Heart left ventricle (tissue), 16 donors: ENCODE measurements at regions of chr1 and their contacts with region 1.

Region 1: DNA sequence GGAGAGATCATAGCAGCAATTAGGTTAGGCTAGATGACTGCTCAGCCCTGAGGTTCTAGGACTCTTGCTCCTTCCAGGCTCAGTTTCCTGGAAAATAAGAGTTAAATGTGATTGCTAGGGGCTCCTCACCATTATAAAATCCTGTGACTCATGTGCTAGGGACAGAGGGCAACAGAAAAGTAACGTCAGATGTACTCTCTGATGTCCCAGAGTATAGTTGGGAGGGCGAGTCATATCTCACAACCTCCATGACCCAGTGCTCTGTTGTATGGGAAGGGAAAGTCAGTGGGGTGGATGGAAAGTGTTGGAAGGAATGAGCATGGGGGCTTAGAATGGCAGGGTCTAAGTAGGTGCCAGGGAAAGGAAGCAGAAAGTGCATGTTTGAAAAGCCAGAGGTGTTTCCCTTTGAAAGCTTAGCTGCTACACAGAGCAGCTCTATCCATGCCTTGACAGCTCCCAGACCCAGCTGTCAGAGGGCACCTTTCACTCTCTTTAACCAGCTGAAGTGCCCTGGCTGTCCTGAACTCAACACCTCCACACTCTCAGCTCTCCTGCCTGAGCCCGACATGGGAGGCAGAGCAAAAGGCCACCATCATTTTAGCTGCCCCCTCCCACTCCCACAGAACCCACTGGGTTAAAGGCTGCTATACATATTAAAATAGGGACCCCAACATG is 11.6 kb downstream of the GJA5 start:
- DNase-seq: peak in 4 of 5 donors; percentile 37 to 76 (median 58)
- ATAC-seq: peak; percentile 93 to 97 (median 96)
- H3K4me3 ChIP-seq: no peak overlapping the region
- H3K27ac ChIP-seq: peak overlapping the region in 9 of 12 donors; percentile 23 to 81 (median 64)
- H3K4me1 ChIP-seq: peaks cover 0 to 29% (median 6%) of the 10 kb centered on the region in 12 donors
- H3K27me3 ChIP-seq: no peaks in the 10 kb centered on the region
- CTCF ChIP-seq: no peak
- POLR2A ChIP-seq: no peak

Region 2: GRCh38 chr1:147640553-147641165 is 108.2 kb before region 1 on chr1:
- intact Hi-C with region 1: no loop called
- DNase-seq: peak; percentile 63 to 77 (median 73)
- ATAC-seq: peak; percentile 85 to 96 (median 94)
- H3K4me3 ChIP-seq: peak overlapping the region in 1 of 12 donors; percentile 18
- H3K27ac ChIP-seq: no peak overlapping the region
- H3K4me1 ChIP-seq: peaks cover 0 to 23% (median 6%) of the 10 kb centered on the region in 12 donors
- H3K27me3 ChIP-seq: no peaks in the 10 kb centered on the region
- CTCF ChIP-seq: peak; percentile 66 to 87 (median 74)
- POLR2A ChIP-seq: no peak

Region 3: GRCh38 chr1:147735423-147735822 is 13.4 kb before region 1 on chr1:
- intact Hi-C with region 1: loop called in 1 of 10 experiments (anchors 2 kb)
- DNase-seq: peak in 2 of 5 donors; percentile 32 to 57
- ATAC-seq: peak; percentile 37 to 80 (median 76)
- H3K4me3 ChIP-seq: no peak overlapping the region
- H3K27ac ChIP-seq: peak overlapping the region in 5 of 12 donors; percentile 3 to 60 (median 31)
- H3K4me1 ChIP-seq: peaks cover 0 to 45% (median 7%) of the 10 kb centered on the region in 12 donors
- H3K27me3 ChIP-seq: no peaks in the 10 kb centered on the region
- CTCF ChIP-seq: no peak
- POLR2A ChIP-seq: no peak

Region 4: DNA sequence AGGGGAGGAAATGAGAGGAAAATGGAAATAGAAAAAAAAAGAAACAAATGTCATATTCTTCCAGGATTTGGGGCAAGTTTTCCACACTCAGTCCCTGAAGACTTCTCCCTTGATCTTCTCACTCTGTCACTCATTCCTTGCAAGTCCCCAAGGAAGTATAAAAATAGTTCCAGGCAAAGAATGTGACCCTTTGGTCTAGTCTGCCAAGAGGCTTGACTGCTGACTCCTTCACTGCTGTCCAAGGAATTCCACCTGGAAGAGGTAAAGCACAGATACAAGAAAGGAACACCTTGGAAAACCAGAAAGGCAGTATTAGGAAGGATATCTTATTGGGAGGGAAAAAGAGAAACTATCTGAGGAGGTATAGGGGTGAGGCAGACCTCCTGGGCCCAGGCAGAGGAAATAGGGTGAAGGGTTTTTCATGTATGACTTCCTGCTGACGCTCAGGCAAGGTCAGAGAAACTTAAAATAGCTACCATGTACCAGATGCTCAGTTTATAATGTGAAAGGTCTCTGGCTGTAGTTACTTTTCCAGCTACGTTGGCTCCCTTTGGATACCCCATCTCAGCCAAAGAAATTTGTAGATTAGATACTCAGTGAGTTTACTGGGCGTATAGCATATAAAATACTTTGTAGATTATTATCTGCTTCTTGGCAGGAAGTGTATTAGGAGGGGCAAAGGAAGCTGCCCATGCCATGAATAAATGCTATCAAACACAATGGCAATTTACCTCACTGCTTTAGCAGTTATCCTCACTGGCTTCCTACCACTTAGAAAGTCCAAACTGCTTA is 13.6 kb after region 1 on chr1:
- intact Hi-C with region 1: loop called in 1 of 10 experiments (anchors 1 kb)
- DNase-seq: no peak
- ATAC-seq: peak; percentile 63 to 81 (median 76)
- H3K4me3 ChIP-seq: no peak overlapping the region
- H3K27ac ChIP-seq: peak overlapping the region in 11 of 12 donors; percentile 38 to 83 (median 64)
- H3K4me1 ChIP-seq: peaks cover 6 to 59% (median 31%) of the 10 kb centered on the region in 12 donors
- H3K27me3 ChIP-seq: no peaks in the 10 kb centered on the region
- CTCF ChIP-seq: no peak
- POLR2A ChIP-seq: no peak

Region 5: GRCh38 chr1:147773215-147773715 is 24.5 kb after region 1 on chr1:
- intact Hi-C with region 1: no loop called
- DNase-seq: peak in 1 of 5 donors; percentile 45
- ATAC-seq: no peak
- H3K4me3 ChIP-seq: peak overlapping the region in 10 of 12 donors; percentile 16 to 48 (median 37)
- H3K27ac ChIP-seq: peak overlapping the region in 9 of 12 donors; percentile 20 to 82 (median 57)
- H3K4me1 ChIP-seq: peaks cover 9 to 58% (median 39%) of the 10 kb centered on the region in 12 donors
- H3K27me3 ChIP-seq: no peaks in the 10 kb centered on the region
- CTCF ChIP-seq: no peak
- POLR2A ChIP-seq: no peak

Region 6: GRCh38 chr1:147821883-147822282 is 73.1 kb after region 1 on chr1:
- intact Hi-C with region 1: loop called in 3 of 10 experiments (anchors 5 to 10 kb)
- DNase-seq: peak in 4 of 5 donors; percentile 33 to 56 (median 49)
- ATAC-seq: peak; percentile 95 to 97 (median 96)
- H3K4me3 ChIP-seq: no peak overlapping the region
- H3K27ac ChIP-seq: peak overlapping the region in 11 of 12 donors; percentile 36 to 90 (median 65)
- H3K4me1 ChIP-seq: peaks cover 0 to 22% (median 14%) of the 10 kb centered on the region in 12 donors
- H3K27me3 ChIP-seq: no peaks in the 10 kb centered on the region
- CTCF ChIP-seq: no peak
- POLR2A ChIP-seq: no peak